Activated CD8-positive, alpha-beta T cell treated with anti-CD3 and anti-CD28 coated beads for 36 hours (primary cell): ENCODE measurements at regions of chr5 and their contacts with region 1.

Region 1: GRCh38 chr5:66840511-66841013 is 244.4 kb downstream of the MAST4 start:
- DNase-seq: peak; percentile 69
- ATAC-seq: peak; percentile 86
- H3K4me3 Mint-ChIP-seq: peak overlapping the region; percentile 8
- H3K27ac Mint-ChIP-seq: peak overlapping the region; percentile 88
- H3K4me1 Mint-ChIP-seq: peaks cover 42% of the 10 kb centered on the region
- H3K27me3 Mint-ChIP-seq: peaks cover 31% of the 10 kb centered on the region
- CTCF ChIP-seq: no peak

Region 2: DNA sequence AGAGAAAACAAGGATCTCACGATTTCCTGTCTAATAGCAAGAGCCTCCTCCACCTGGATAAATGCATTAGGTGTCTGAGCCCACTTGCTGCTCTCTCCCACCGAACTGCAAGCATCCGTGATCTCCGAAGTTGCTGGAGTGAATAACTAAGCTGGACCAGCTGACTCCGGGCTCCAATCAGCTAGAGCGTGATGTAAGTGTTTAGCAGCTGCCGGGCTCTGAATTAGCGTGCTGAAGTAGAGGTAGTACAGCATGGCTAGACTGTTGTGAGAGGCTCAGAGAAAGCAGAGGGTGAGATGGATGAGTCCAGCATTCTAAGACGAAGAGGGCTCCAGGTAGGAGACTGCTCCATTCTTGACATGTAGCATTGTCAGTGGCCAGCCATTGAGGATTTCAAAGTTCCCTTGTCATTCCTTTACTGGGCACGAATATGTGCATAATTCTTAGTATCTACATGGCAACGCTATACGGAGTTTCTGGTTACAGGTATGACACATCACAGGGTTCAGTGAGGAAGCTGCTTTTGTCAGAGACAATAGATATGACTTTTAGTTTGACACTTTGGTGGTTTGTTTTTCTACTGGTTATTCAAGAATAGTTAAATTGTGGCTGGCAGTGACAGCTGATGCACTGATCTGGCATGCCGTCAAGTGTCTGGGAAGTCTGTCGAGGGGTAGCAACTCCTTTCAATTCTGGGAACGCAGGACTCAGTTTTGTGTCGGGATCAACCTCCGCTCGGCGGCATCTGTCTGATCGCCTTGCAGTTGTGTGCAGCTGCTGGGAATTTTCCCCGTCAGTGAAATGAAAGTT is 11.8 kb before region 1 on chr5:
- CTCF ChIA-PET with region 1: interaction called, 27 read pairs
- POLR2A ChIA-PET with region 1: interaction called, 10 read pairs
- intact Hi-C with region 1: no loop called
- DNase-seq: peak; percentile 87
- ATAC-seq: peak; percentile 94
- H3K4me3 Mint-ChIP-seq: peak overlapping the region; percentile 83
- H3K27ac Mint-ChIP-seq: peak overlapping the region; percentile 82
- H3K4me1 Mint-ChIP-seq: peaks cover 23% of the 10 kb centered on the region
- H3K27me3 Mint-ChIP-seq: peaks cover 39% of the 10 kb centered on the region
- CTCF ChIP-seq: no peak